CD14-positive monocyte (primary cell): ENCODE measurements at regions of chr12 and their contacts with region 1.

Region 1: GRCh38 chr12:56041552-56042429 is at the start of gene RPS26:
- DNase-seq: peak; percentile 93 to 98 (median 98)
- H3K4me3 ChIP-seq: peak within 1 kb of the TSS; percentile 78 to 95 (median 92)
- H3K4me3 Mint-ChIP-seq: peak within 1 kb of the TSS; percentile 95 to 98
- H3K27ac ChIP-seq: peak within 1 kb of the TSS; percentile 79 to 97
- H3K27ac Mint-ChIP-seq: peak within 1 kb of the TSS; percentile 93 to 99 (median 96)
- H3K4me1 ChIP-seq: peaks cover 14 to 18% of the 10 kb centered on the region in 2 donors
- H3K4me1 Mint-ChIP-seq: peaks cover 14% of the 10 kb centered on the region
- H3K27me3 ChIP-seq: no peaks in the 10 kb centered on the region
- H3K27me3 Mint-ChIP-seq: no peaks in the 10 kb centered on the region
- CTCF ChIP-seq: peak; percentile 51
- polyA plus RNA-seq, gene RPS26: 238 to 363 (median 286) TPM

Region 2: GRCh38 chr12:55728939-55729823 is 312.6 kb before region 1 on chr12 and contains the start of gene CD63:
- intact Hi-C with region 1: loop called in 1 of 2 experiments (anchors 5 kb)
- DNase-seq: peak; percentile 79 to 82 (median 82)
- H3K4me3 ChIP-seq: peak within 1 kb of the TSS; percentile 65 to 90 (median 82)
- H3K4me3 Mint-ChIP-seq: peak within 1 kb of the TSS; percentile 90 to 95
- H3K27ac ChIP-seq: peak within 1 kb of the TSS; percentile 99
- H3K27ac Mint-ChIP-seq: peak within 1 kb of the TSS; percentile 96 to 99 (median 97)
- H3K4me1 ChIP-seq: peaks cover 33 to 42% of the 10 kb centered on the region in 2 donors
- H3K4me1 Mint-ChIP-seq: peaks cover 45% of the 10 kb centered on the region
- H3K27me3 ChIP-seq: no peaks in the 10 kb centered on the region
- H3K27me3 Mint-ChIP-seq: peaks cover 0 to 5% (median 0%) of the 10 kb centered on the region in 3 donors
- CTCF ChIP-seq: no peak
- polyA plus RNA-seq, gene CD63: 336 to 1,099 (median 988) TPM

Region 3: GRCh38 chr12:55847603-55848291 is 194.0 kb before region 1 on chr12:
- intact Hi-C with region 1: no loop called
- DNase-seq: peak; percentile 73 to 96 (median 89)
- H3K4me3 ChIP-seq: peak overlapping the region in 1 of 3 experiments; percentile 63
- H3K4me3 Mint-ChIP-seq: peak overlapping the region; percentile 24 to 46
- H3K27ac ChIP-seq: peak overlapping the region; percentile 73 to 92
- H3K27ac Mint-ChIP-seq: peak overlapping the region; percentile 90 to 97 (median 97)
- H3K4me1 ChIP-seq: peaks cover 22 to 25% of the 10 kb centered on the region in 2 donors
- H3K4me1 Mint-ChIP-seq: peaks cover 40% of the 10 kb centered on the region
- H3K27me3 ChIP-seq: no peaks in the 10 kb centered on the region
- H3K27me3 Mint-ChIP-seq: peaks cover 2 to 7% (median 5%) of the 10 kb centered on the region in 3 donors
- CTCF ChIP-seq: no peak

Region 4: DNA sequence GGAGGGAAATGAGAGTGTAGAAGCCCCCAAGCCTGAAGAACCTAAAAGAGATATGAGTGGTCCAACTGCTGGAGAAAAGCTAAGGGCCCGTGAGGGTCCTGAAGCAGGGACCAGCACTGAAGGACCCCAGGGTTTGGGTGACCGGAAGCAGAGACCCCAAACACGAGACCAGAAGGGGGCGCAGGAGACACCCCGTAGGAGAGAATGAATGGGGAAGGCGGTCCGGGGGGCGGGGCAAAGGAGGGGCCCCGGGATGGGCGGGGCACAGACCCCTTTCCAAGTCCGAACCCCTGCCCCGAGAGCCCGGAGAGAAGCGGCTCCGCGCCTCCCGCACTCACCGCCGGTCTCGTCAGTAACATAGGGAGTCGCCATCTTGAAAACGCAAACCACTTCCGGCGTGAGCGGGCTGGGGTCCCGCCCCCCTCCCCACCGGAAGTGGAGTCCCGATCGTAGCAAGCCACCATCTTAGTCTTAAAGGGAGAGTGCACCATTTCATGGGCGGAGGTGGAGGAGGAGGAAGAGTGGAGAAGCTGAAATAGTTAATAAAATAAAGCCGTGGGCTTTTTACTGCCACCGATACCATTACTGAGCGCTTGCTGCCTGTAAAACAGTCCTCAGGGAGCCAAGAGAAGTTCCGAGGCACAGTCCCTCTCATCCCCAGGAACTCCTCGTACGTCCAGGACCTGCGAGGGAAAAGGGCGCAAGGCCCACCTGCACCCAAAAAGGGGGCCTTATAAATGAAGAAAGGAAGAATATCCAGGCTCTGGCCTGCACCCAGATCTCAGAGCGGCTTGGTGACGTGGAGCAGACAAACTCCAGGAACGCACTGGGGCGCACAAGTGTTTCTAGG is 114.8 kb before region 1 on chr12:
- intact Hi-C with region 1: loop called in 1 of 2 experiments (anchors 2 kb)
- DNase-seq: peak; percentile 86 to 89 (median 88)
- H3K4me3 ChIP-seq: peak overlapping the region; percentile 65 to 93 (median 91)
- H3K4me3 Mint-ChIP-seq: peak overlapping the region; percentile 96 to 98
- H3K27ac ChIP-seq: peak overlapping the region; percentile 85 to 92
- H3K27ac Mint-ChIP-seq: peak overlapping the region; percentile 95 to 99 (median 97)
- H3K4me1 ChIP-seq: peaks cover 46 to 51% of the 10 kb centered on the region in 2 donors
- H3K4me1 Mint-ChIP-seq: peaks cover 53% of the 10 kb centered on the region
- H3K27me3 ChIP-seq: no peaks in the 10 kb centered on the region
- H3K27me3 Mint-ChIP-seq: peaks cover 0 to 3% (median 1%) of the 10 kb centered on the region in 3 donors
- CTCF ChIP-seq: peak; percentile 78

Region 5: DNA sequence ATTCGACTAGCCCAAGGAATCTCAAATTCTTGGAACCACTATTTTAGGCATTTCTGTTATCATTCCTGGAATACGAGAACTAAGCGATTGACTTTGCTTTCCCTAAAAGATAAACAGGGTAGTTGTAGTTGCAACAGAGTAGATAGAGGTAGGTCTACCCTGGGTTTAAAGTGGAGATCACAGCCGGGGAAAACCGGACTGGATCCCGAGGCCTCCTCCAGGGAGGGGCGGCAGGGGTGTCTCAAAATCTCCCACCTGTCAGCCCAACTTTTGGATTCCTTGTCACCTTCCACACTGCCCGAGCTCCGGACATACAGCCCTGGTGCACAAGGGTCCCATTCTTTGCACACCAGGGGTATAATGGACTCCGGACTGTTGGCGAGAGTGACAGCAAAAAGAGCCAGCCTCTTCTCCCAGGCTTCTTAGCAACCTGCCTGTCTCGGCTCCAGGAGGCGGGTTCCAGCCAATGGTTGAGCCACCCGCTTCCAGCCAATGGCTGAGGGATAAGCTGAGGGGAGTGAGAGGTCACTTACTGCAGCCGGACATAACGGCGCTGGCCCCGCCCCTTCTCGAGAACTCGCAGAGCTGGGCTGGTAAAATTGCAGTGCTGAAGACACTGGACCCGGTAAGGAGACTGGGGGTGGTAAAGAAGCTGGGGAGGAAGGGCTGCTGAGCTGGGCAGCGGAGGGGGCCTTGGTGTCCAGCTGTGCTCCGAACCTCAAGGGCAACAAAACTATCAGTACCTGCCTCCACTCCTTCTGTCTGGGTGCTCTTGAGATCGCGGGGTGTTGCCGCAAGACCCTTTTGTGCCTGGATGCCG is 44.9 kb before region 1 on chr12 and contains the start of gene SUOX:
- intact Hi-C with region 1: loop called (anchors 2 to 5 kb)
- DNase-seq: peak; percentile 90 to 94 (median 90)
- H3K4me3 ChIP-seq: peak within 1 kb of the TSS; percentile 51 to 98 (median 90)
- H3K4me3 Mint-ChIP-seq: peak within 1 kb of the TSS; percentile 88 to 98
- H3K27ac ChIP-seq: peak within 1 kb of the TSS; percentile 50 to 84
- H3K27ac Mint-ChIP-seq: peak within 1 kb of the TSS; percentile 88 to 97 (median 91)
- H3K4me1 ChIP-seq: peaks cover 14 to 19% of the 10 kb centered on the region in 2 donors
- H3K4me1 Mint-ChIP-seq: peaks cover 25% of the 10 kb centered on the region
- H3K27me3 ChIP-seq: no peaks in the 10 kb centered on the region
- H3K27me3 Mint-ChIP-seq: no peaks in the 10 kb centered on the region
- CTCF ChIP-seq: no peak
- polyA plus RNA-seq, gene SUOX: 9.7 to 17.1 (median 14.4) TPM

Region 6: GRCh38 chr12:56117778-56118687 is 76.2 kb after region 1 on chr12 and contains the start of gene ZC3H10:
- intact Hi-C with region 1: loop called (anchors 5 kb)
- DNase-seq: peak; percentile 100
- H3K4me3 ChIP-seq: peak within 1 kb of the TSS; percentile 89 to 97 (median 89)
- H3K4me3 Mint-ChIP-seq: peak within 1 kb of the TSS; percentile 95 to 98
- H3K27ac ChIP-seq: peak within 1 kb of the TSS; percentile 92 to 98
- H3K27ac Mint-ChIP-seq: peak within 1 kb of the TSS; percentile 97 to 100 (median 99)
- H3K4me1 ChIP-seq: peaks cover 30 to 35% of the 10 kb centered on the region in 2 donors
- H3K4me1 Mint-ChIP-seq: peaks cover 38% of the 10 kb centered on the region
- H3K27me3 ChIP-seq: no peaks in the 10 kb centered on the region
- H3K27me3 Mint-ChIP-seq: no peaks in the 10 kb centered on the region
- CTCF ChIP-seq: peak; percentile 44
- polyA plus RNA-seq, gene ZC3H10: 1.7 to 3.1 (median 1.8) TPM